ENCODE measurements at regions of chr17 and their contacts with region 1.

Region 1: DNA sequence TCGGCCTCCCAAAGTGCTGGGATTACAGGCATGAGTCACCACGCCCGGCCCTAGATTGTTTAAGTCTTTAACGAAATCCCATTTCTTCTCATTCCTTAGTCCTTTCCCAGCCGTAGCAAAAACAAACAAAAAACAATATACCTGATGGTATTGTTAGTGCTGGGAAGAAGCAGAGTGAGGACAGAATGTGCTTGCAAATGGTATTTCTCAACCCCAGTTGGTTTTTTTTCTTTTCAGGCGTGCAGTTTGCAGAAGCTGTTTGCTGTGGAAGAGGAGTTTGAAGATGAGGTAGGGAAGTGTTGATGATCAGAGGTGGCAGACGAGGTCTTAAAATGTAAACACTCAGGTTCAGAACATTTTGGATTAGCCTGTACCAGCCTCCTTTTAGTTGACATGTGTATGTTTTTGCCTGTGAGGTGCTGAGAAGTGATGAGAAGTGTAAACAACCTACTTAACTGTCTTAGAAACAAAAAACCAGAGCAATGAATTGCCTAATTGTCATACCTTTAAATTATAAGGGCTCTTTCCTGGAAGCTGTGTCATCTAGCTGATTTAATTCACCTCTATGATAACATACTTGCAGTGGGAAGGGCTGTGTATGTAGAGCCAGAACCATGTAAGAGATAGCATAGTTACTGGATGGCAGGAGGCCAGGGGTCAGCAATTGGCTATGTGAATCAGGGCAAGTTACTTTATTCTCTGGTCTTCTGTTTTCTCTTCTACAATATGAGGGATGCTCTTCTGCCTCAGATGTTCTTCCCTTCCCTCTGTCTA is 3.4 kb downstream of the HROB start:
- DNase-seq: no peak
- H3K4me3 ChIP-seq: no peak overlapping the region
- H3K27ac ChIP-seq: no peak overlapping the region
- H3K4me1 ChIP-seq: peaks cover 0 to 2% (median 0%) of the 10 kb centered on the region in 4 experiments; a peak in 3 of 7 replicates
- H3K27me3 ChIP-seq: no peaks in the 10 kb centered on the region
- CTCF ChIP-seq: no peak
- EP300 ChIP-seq: no peak
- POLR2A ChIP-seq: no peak
- RAD21 ChIP-seq: no peak

Region 2: GRCh38 chr17:44159519-44160210 is 14.5 kb after region 1 on chr17:
- CTCF ChIA-PET with region 1: interaction called, 22 read pairs
- POLR2A ChIA-PET with region 1: interaction called, 8 read pairs
- DNase-seq: no peak
- H3K4me3 ChIP-seq: no peak overlapping the region
- H3K27ac ChIP-seq: no peak overlapping the region
- H3K4me1 ChIP-seq: no peaks in the 10 kb centered on the region
- H3K27me3 ChIP-seq: no peaks in the 10 kb centered on the region
- CTCF ChIP-seq: no peak
- EP300 ChIP-seq: no peak
- POLR2A ChIP-seq: no peak
- RAD21 ChIP-seq: no peak